Activated CD8-positive, alpha-beta T cell treated with anti-CD3 and anti-CD28 coated beads for 36 hours (primary cell): ENCODE measurements at regions of chr1 and their contacts with region 1.

Region 1: GRCh38 chr1:34742667-34743270 is 12.1 kb upstream of the GJB5 start:
- DNase-seq: peak; percentile 84
- ATAC-seq: peak; percentile 98
- H3K4me3 Mint-ChIP-seq: no peak overlapping the region
- H3K27ac Mint-ChIP-seq: no peak overlapping the region
- H3K4me1 Mint-ChIP-seq: no peaks in the 10 kb centered on the region
- H3K27me3 Mint-ChIP-seq: no peaks in the 10 kb centered on the region
- CTCF ChIP-seq: peak; percentile 87

Region 2: DNA sequence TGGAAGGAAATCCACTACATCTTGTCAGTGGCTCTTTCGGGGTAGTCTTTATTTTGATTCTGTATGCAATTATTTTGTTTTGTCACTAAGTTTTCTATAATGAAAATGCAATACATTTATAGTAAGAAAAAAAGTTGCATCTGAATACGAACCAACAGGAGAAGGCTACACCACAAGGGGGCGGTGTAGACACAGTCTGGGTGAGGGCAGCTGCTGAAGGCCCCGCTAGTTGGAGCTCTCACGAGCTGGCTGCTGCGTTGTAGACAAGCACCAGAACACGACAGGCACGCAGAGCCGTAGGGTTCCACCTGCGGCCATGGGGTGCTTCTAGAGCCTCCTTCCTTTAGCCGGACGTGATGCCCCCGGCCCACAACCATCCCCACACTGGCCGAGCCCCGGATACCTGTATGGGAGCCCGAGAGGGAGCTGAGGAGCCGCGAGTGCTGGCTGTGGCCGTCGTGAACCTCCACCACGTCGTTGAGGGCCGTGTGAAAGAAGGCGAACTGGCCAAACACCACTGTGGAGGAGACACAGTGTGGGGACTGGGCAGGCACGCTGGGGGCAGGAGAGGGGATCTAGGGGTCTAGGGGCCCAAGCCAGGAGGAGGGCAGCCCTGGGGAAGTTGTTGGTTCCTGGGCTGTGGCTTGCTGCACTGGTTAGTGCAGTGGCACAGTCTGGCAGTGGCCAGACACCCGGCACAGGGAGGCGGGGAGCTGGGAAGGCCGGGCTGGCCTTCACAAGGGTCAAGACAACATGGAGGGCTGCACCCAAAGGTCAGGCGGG is 1109.6 kb before region 1 on chr1:
- CTCF ChIA-PET with region 1: interaction called, 34 read pairs
- POLR2A ChIA-PET with region 1: no interaction called
- intact Hi-C with region 1: loop called (anchors 10 kb)
- DNase-seq: peak; percentile 95
- ATAC-seq: peak; percentile 93
- H3K4me3 Mint-ChIP-seq: no peak overlapping the region
- H3K27ac Mint-ChIP-seq: no peak overlapping the region
- H3K4me1 Mint-ChIP-seq: no peaks in the 10 kb centered on the region
- H3K27me3 Mint-ChIP-seq: peaks cover 29% of the 10 kb centered on the region
- CTCF ChIP-seq: peak; percentile 97

Region 3: GRCh38 chr1:34460193-34460592 is 282.6 kb before region 1 on chr1:
- CTCF ChIA-PET with region 1: interaction called, 35 read pairs
- POLR2A ChIA-PET with region 1: no interaction called
- intact Hi-C with region 1: loop called (anchors 2 kb)
- DNase-seq: peak; percentile 73
- ATAC-seq: no peak
- H3K4me3 Mint-ChIP-seq: no peak overlapping the region
- H3K27ac Mint-ChIP-seq: no peak overlapping the region
- H3K4me1 Mint-ChIP-seq: no peaks in the 10 kb centered on the region
- H3K27me3 Mint-ChIP-seq: peaks cover 5% of the 10 kb centered on the region
- CTCF ChIP-seq: peak; percentile 68

Region 4: GRCh38 chr1:34538481-34538880 is 204.3 kb before region 1 on chr1:
- CTCF ChIA-PET with region 1: no interaction called
- POLR2A ChIA-PET with region 1: no interaction called
- intact Hi-C with region 1: loop called (anchors 5 kb)
- DNase-seq: no peak
- ATAC-seq: no peak
- H3K4me3 Mint-ChIP-seq: no peak overlapping the region
- H3K27ac Mint-ChIP-seq: no peak overlapping the region
- H3K4me1 Mint-ChIP-seq: no peaks in the 10 kb centered on the region
- H3K27me3 Mint-ChIP-seq: peaks cover 18% of the 10 kb centered on the region
- CTCF ChIP-seq: no peak

Region 5: DNA sequence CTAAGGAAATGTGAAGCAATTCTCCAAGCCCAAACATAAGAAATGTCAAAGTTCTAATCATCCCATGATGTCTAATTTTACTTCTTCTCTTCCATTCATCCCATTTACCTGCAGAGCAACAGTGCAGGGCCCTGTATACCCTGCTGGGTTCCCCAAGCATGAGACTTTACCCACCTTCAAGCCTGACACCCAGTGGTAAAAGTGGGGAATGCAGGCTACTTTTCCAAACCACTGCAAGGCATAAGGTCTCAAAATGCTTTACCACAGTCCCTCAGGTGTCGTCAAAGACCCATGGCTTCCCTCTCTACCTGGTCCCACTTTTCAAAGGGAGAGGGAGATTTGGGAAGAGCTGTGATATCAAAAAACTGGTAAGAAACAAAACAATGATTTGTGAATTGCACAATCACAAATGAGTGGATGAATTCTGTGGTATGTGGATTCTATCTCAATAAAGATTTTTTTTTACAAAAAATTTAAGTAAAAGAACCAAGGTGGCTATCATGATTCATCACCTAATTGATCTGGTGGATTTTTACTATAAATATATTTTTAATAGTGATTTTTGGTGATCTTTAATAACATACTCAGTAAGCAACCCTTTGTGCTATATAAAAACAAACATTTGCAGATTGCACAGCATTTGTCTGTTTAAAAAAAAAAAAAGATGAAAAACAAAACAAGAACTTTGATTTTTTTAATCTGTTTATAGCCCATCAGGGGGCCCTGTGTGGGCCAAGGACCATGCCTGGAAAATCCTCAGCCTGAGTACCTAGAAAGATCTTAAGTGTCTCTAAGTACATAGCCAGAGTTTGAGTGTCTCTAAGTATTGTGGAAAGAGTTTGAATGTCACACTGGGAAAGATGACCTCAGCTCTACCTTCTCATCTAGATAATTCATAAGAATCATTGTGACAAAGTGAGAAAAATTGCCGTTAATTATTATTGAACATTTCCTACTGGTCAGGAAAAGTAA is 61.0 kb before region 1 on chr1:
- CTCF ChIA-PET with region 1: interaction called, 10 read pairs
- POLR2A ChIA-PET with region 1: no interaction called
- intact Hi-C with region 1: no loop called
- DNase-seq: peak; percentile 72
- ATAC-seq: peak; percentile 73
- H3K4me3 Mint-ChIP-seq: no peak overlapping the region
- H3K27ac Mint-ChIP-seq: no peak overlapping the region
- H3K4me1 Mint-ChIP-seq: peaks cover 10% of the 10 kb centered on the region
- H3K27me3 Mint-ChIP-seq: peaks cover 15% of the 10 kb centered on the region
- CTCF ChIP-seq: peak; percentile 94

Region 6: GRCh38 chr1:34726861-34727260 is 15.9 kb before region 1 on chr1:
- CTCF ChIA-PET with region 1: interaction called, 15 read pairs
- POLR2A ChIA-PET with region 1: no interaction called
- intact Hi-C with region 1: no loop called
- DNase-seq: no peak
- ATAC-seq: no peak
- H3K4me3 Mint-ChIP-seq: no peak overlapping the region
- H3K27ac Mint-ChIP-seq: no peak overlapping the region
- H3K4me1 Mint-ChIP-seq: no peaks in the 10 kb centered on the region
- H3K27me3 Mint-ChIP-seq: peaks cover 16% of the 10 kb centered on the region
- CTCF ChIP-seq: no peak

Region 7: GRCh38 chr1:34753163-34753562 is 10.4 kb after region 1 on chr1:
- CTCF ChIA-PET with region 1: interaction called, 21 read pairs
- POLR2A ChIA-PET with region 1: interaction called, 3 read pairs
- intact Hi-C with region 1: no loop called
- DNase-seq: no peak
- ATAC-seq: no peak
- H3K4me3 Mint-ChIP-seq: no peak overlapping the region
- H3K27ac Mint-ChIP-seq: no peak overlapping the region
- H3K4me1 Mint-ChIP-seq: no peaks in the 10 kb centered on the region
- H3K27me3 Mint-ChIP-seq: no peaks in the 10 kb centered on the region
- CTCF ChIP-seq: no peak